ENCODE measurements at regions of chr7 and their contacts with region 1.

Region 1: GRCh38 chr7:120987683-120988590 is 574 bp upstream of the CPED1 start:
- DNase-seq: peak; percentile 89 to 90
- ATAC-seq: peak; percentile 83 to 93 (median 88)
- H3K4me3 ChIP-seq: peak overlapping the region; percentile 40 to 75 (median 58)
- H3K27ac ChIP-seq: peak overlapping the region; percentile 64 to 97 (median 91)
- H3K4me1 ChIP-seq: peaks cover 0 to 48% (median 14%) of the 10 kb centered on the region in 9 donors
- H3K27me3 ChIP-seq: peaks cover 0 to 26% (median 0%) of the 10 kb centered on the region in 7 donors
- CTCF ChIP-seq: peak; percentile 88 to 99 (median 97)

Region 2: GRCh38 chr7:121041516-121042148 is 53.7 kb after region 1 on chr7:
- intact Hi-C with region 1: loop called in 2 of 10 experiments (anchors 1 to 10 kb)
- DNase-seq: no peak
- ATAC-seq: peak in 6 of 8 donors; percentile 36 to 86 (median 58)
- H3K4me3 ChIP-seq: peak overlapping the region in 1 of 10 donors; percentile 0
- H3K27ac ChIP-seq: peak overlapping the region in 9 of 10 donors; percentile 33 to 85 (median 67)
- H3K4me1 ChIP-seq: peaks cover 0 to 66% (median 47%) of the 10 kb centered on the region in 9 donors
- H3K27me3 ChIP-seq: no peaks in the 10 kb centered on the region
- CTCF ChIP-seq: no peak

Region 3: GRCh38 chr7:121081327-121081936 is 93.5 kb after region 1 on chr7:
- intact Hi-C with region 1: loop called (anchors 1 to 5 kb)
- DNase-seq: no peak
- ATAC-seq: peak in 7 of 8 donors; percentile 49 to 62 (median 58)
- H3K4me3 ChIP-seq: no peak overlapping the region
- H3K27ac ChIP-seq: peak overlapping the region in 2 of 10 donors; percentile 31 to 34
- H3K4me1 ChIP-seq: peaks cover 0 to 60% (median 41%) of the 10 kb centered on the region in 9 donors
- H3K27me3 ChIP-seq: no peaks in the 10 kb centered on the region
- CTCF ChIP-seq: peak; percentile 64 to 84 (median 78)

Region 4: GRCh38 chr7:121385800-121386179 is 397.9 kb after region 1 on chr7:
- intact Hi-C with region 1: loop called in 1 of 10 experiments (anchors 10 kb)
- DNase-seq: no peak
- ATAC-seq: peak in 5 of 8 donors; percentile 27 to 73 (median 37)
- H3K4me3 ChIP-seq: no peak overlapping the region
- H3K27ac ChIP-seq: no peak overlapping the region
- H3K4me1 ChIP-seq: peaks cover 5 to 53% (median 33%) of the 10 kb centered on the region in 9 donors
- H3K27me3 ChIP-seq: no peaks in the 10 kb centered on the region
- CTCF ChIP-seq: no peak

Region 5: DNA sequence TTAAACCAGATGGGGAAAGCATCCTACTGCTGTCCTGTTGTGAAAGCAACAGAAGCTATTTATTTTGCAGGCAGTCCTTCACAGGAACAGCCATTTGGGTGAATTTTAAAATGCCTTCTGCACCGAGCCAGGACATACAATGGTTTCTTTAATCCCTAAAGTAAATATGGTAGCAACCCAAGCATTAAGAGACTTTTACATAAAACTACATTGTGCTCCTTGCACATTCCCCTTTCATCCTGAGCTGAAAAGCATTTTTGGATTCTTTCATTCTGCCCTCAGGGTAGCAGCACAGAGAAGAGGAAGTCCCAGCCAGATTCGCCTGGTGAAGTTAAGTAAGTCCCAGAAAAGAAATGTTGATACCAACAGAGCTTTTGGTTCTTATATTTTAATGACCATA is 492.1 kb after region 1 on chr7:
- intact Hi-C with region 1: no loop called
- DNase-seq: no peak
- ATAC-seq: no peak
- H3K4me3 ChIP-seq: no peak overlapping the region
- H3K27ac ChIP-seq: no peak overlapping the region
- H3K4me1 ChIP-seq: peaks cover 0 to 2% (median 0%) of the 10 kb centered on the region in 9 donors
- H3K27me3 ChIP-seq: no peaks in the 10 kb centered on the region
- CTCF ChIP-seq: no peak

Region 6: GRCh38 chr7:122350701-122351100 is 1362.8 kb after region 1 on chr7:
- intact Hi-C with region 1: no loop called
- DNase-seq: no peak
- ATAC-seq: no peak
- H3K4me3 ChIP-seq: no peak overlapping the region
- H3K27ac ChIP-seq: no peak overlapping the region
- H3K4me1 ChIP-seq: no peaks in the 10 kb centered on the region
- H3K27me3 ChIP-seq: no peaks in the 10 kb centered on the region
- CTCF ChIP-seq: no peak